ENCODE measurements at regions of chr14 and their contacts with region 1.

Region 1: DNA sequence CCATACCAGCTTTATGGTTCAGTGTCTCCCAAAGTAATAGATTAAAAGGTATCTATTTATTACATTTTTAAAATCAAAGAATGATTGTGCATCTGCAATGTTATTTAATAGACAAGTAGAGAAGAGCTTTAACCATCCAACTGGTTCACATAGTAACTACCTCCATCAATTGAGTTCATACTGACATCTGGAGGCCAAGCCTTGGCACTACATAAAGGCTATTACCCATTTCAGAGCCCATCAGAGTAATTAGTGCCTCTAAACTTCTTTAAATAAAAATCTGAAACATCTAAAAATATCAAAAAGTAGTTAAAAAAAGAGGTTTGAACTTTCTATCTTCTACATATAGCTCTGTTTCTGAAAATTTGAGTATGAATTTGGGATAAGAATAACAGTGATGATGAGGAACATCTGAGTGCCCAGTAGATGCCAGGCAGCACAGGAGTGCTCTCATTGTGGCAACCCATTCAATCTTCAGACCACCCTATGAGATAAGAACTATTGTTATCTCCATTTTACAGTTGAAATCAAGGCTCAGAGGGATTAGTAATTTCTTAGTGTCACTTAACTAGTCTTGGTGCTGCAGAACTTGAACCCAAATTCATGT is 132.9 kb upstream of the DAAM1 start:
- DNase-seq: no peak
- ATAC-seq: peak; percentile 63

Region 2: GRCh38 chr14:58501214-58501816 is 554.2 kb before region 1 on chr14:
- intact Hi-C with region 1: loop called (anchors 1 kb)
- DNase-seq: no peak
- ATAC-seq: peak; percentile 68